Astrocyte of the cerebellum (primary cell): ENCODE measurements at regions of chr11 and their contacts with region 1.

Region 1: DNA sequence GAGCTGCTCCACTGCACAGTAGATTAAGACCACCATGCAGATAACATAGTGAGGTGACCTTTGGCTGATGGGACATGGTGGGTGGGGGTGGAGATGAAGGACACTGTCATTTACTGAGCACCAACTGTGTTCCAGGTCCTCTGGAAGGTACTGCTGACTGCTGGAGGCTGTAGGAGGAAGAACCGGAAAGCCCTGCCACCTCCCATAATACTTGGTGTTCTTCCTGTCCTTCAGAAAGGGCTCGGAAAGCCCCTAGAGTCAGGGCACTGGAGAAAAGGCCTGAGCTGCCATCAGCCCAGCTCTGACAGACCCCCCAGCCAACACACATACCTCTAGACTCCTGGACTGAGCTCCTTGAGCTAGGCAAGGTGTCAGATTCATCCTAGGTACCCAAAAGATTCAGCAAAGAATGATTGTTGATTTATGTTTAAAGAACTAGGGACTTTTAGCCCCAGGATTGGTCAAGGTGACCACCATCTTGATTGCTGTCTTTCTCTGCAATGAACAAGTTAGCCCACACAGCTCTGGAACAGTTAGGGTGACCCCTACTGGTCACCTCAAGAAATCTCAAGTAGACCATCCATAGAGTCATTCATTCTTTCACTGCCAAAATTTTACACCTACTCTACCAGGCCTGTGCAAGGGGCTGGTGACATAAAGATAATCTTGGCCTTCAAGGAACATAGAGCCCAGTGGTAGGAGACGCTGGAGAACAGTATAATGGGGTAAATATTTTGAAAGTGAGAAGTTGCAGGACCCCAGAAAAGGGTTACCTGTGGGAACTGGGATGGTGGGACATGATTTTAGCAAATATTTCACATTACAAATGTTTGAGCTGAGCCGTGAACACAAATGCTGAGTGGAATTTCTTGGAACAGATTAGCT is 39.4 kb downstream of the IRAG1 start:
- DNase-seq: no peak
- H3K4me3 ChIP-seq: no peak overlapping the region
- CTCF ChIP-seq: peak; percentile 57

Region 2: DNA sequence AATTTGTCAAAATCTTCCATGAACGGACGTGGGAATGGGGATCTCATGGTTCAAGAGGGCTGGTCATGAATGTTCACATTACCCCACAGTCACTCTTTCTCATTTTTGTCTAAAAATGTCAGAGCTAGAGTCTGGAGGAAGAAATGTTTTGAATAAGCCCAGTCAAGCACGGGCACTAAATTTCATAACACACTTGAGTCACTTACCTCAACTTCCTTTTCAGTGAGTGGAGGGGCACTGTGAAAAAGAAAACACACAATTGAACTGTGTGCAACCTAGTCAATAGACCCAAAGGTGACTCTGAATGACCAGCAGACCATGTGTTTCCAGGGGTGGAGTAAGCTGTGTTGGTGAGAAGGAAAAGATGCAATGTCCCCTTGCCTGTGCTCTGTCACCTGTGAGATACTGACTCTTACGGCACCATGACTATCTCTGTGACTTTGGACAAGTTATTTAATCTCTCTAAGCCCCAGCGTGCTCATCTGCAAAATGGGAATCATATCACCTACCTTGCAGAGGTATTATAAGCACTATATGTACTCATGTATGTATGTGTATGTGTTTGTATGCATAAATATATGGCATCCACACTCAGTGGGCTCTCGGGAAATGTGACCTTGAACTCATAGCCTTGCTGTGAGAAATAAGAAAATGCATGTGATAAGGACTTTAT is 47.5 kb before region 1 on chr11:
- in situ Hi-C with region 1: loop called (anchors 5 kb)
- DNase-seq: no peak
- H3K4me3 ChIP-seq: no peak overlapping the region
- CTCF ChIP-seq: no peak